Psoas muscle (tissue), 8 donors: ENCODE measurements at regions of chr20 and their contacts with region 1.

Region 1: DNA sequence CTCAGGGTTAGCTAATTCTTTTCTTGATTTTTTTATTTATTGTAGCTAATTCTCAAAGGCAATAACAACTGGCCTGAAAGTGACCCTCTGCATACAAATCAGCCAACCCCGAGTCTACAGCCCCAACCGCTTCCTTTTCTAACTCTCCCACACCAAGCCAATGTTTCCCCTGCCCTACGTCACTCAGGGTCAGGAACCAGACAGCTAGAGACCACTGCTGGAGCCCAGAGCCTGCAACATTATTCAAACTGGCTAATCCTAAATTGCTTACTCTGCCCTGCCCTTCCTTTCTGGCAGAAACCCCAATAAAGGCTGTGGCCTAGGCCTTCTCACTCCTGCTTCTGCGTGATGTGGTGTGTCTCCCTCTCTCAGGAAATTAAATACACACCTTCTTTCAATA is 320.7 kb downstream of the CBLN4 start:
- DNase-seq: no peak
- ATAC-seq: no peak
- H3K4me3 ChIP-seq: no peak overlapping the region
- H3K27ac ChIP-seq: no peak overlapping the region
- H3K4me1 ChIP-seq: no peaks in the 10 kb centered on the region
- H3K27me3 ChIP-seq: no peaks in the 10 kb centered on the region
- CTCF ChIP-seq: no peak

Region 2: GRCh38 chr20:54044156-54044555 is 1640.4 kb before region 1 on chr20:
- intact Hi-C with region 1: loop called in 1 of 2 experiments (anchors 5 kb)
- DNase-seq: no peak
- ATAC-seq: peak in 1 of 4 donors; percentile 40
- H3K4me3 ChIP-seq: no peak overlapping the region
- H3K27ac ChIP-seq: no peak overlapping the region
- H3K4me1 ChIP-seq: no peaks in the 10 kb centered on the region
- H3K27me3 ChIP-seq: peaks cover 0 to 14% (median 0%) of the 10 kb centered on the region in 3 donors
- CTCF ChIP-seq: no peak